A549 (cell line): ENCODE measurements at regions of chr7 and their contacts with region 1.

Region 1: GRCh38 chr7:71733107-71733870 is 601.3 kb downstream of the GALNT17 start:
- DNase-seq: peak; percentile 44 to 63
- ATAC-seq: peak; percentile 77 to 83
- H3K4me3 ChIP-seq: no peak overlapping the region
- H3K27ac ChIP-seq: no peak overlapping the region
- H3K4me1 ChIP-seq: no peaks in the 10 kb centered on the region
- CTCF ChIP-seq: peak; percentile 63
- EP300 ChIP-seq: no peak
- POLR2A ChIP-seq: no peak
- RAD21 ChIP-seq: peak; percentile 77 to 82

Region 2: GRCh38 chr7:70849580-70850235 is 883.6 kb before region 1 on chr7:
- CTCF ChIA-PET with region 1: interaction called, 63 read pairs
- POLR2A ChIA-PET with region 1: no interaction called
- DNase-seq: no peak
- ATAC-seq: no peak
- H3K4me3 ChIP-seq: no peak overlapping the region
- H3K27ac ChIP-seq: no peak overlapping the region
- H3K4me1 ChIP-seq: no peaks in the 10 kb centered on the region
- CTCF ChIP-seq: no peak
- EP300 ChIP-seq: no peak
- POLR2A ChIP-seq: no peak
- RAD21 ChIP-seq: no peak

Region 3: DNA sequence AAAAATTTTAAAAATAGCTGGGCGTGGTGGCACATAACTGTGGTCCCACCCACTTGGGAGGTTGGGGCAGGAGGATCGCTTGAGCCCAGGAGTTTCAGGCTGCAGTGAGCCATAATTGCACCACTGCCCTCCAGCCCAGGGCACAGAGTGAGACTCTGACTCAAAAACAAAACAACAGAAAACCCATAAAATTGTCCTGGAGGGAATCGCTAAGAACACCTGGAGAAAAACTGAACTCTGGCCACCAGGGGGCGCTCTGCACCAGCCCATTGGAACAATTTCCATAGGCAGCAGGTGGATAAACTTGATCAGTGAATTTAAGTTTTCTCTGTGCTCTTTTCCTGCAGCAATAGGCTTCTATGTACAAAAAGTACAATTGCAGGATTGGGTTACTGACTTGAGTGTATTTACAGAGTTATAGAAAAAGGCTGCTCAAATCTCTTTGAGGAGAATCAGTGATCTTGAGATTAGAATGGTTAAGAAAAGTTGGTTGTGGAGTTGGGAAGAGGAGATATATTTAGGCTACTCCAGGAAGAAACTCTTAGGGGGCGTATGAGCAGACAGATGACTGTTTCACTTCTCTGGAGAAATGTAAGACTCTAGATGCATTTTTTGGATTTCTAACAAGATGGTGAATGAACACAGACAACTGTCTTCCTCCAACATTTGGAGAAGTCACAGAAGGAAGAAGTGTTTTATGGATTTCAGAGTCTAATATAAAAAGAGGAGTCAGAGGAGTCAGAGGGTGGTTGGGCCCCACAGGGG is 876.2 kb before region 1 on chr7:
- CTCF ChIA-PET with region 1: interaction called, 63 read pairs
- POLR2A ChIA-PET with region 1: interaction called, 3 read pairs
- DNase-seq: peak; percentile 40 to 50
- ATAC-seq: peak in 1 of 2 experiments; percentile 40; a peak in 1 of 6 replicates
- H3K4me3 ChIP-seq: no peak overlapping the region
- H3K27ac ChIP-seq: no peak overlapping the region
- H3K4me1 ChIP-seq: no peaks in the 10 kb centered on the region
- CTCF ChIP-seq: peak; percentile 66
- EP300 ChIP-seq: no peak
- POLR2A ChIP-seq: no peak
- RAD21 ChIP-seq: peak; percentile 73 to 85